BJ (cell line): ENCODE measurements at regions of chr7 and their contacts with region 1.

Region 1: GRCh38 chr7:116242178-116242577 is 31.8 kb downstream of the TES start:
- DNase-seq: no peak
- H3K4me3 ChIP-seq: no peak overlapping the region
- H3K27me3 ChIP-seq: no peaks in the 10 kb centered on the region
- CTCF ChIP-seq: peak; percentile 38

Region 2: DNA sequence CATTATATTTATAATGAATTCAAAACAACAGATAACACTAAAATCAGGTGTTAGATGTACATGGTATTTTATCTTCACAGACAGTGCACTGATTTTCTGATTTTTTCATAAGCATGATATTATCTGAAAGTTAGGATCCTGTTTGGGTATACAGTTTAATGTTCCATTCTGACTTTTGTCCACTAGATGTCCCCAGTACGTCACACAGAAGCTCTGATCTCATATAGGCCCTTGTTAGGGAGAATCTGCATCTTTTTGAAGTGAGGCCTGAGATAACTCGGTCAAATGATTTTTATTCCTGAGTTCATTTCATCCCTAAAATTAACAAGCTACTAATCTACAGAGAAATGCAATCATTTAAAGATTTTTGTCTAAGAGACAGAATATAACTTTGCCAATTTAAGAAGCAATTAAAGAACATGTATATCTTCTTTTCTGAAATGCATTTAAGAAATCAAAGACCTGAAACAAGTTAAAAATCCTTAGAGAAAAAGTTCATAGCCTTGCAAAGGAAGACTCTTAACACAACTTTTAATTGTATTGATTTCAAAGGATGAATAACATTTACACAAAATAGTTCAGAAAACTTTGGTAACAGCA is 103.9 kb before region 1 on chr7:
- CTCF ChIA-PET with region 1: interaction called, 16 read pairs
- POLR2A ChIA-PET with region 1: no interaction called
- DNase-seq: peak; percentile 17
- H3K4me3 ChIP-seq: no peak overlapping the region
- H3K27me3 ChIP-seq: no peaks in the 10 kb centered on the region
- CTCF ChIP-seq: peak; percentile 73

Region 3: GRCh38 chr7:116180302-116180701 is 61.9 kb before region 1 on chr7:
- CTCF ChIA-PET with region 1: interaction called, 192 read pairs
- POLR2A ChIA-PET with region 1: no interaction called
- DNase-seq: no peak
- H3K4me3 ChIP-seq: no peak overlapping the region
- H3K27me3 ChIP-seq: no peaks in the 10 kb centered on the region
- CTCF ChIP-seq: peak; percentile 78

Region 4: DNA sequence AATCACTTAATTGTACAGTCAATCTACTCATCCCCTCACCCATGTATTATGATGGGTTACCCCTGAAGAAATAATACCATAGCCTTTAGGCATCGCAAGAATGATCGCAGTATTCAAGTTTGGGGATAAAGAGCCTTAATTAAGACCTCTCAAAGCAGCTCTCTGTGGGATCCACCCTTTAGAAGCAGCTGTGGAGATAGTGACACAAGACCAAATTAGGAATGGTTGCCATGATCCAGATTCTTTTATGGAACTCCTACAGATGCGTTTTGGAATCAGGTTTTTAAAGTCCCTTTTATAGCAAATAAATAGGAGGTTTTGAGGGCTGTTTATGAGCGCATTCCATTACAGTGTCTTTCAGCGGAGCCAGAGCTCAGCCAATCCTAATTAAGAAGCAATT is 19.7 kb before region 1 on chr7:
- CTCF ChIA-PET with region 1: no interaction called
- POLR2A ChIA-PET with region 1: no interaction called
- DNase-seq: no peak
- H3K4me3 ChIP-seq: no peak overlapping the region
- H3K27me3 ChIP-seq: peaks cover 2% of the 10 kb centered on the region; the same call in 1 of the 2 replicates
- CTCF ChIP-seq: no peak

Region 5: GRCh38 chr7:116271963-116272839 is 30.0 kb after region 1 on chr7:
- CTCF ChIA-PET with region 1: no interaction called
- POLR2A ChIA-PET with region 1: no interaction called
- DNase-seq: peak; percentile 85
- H3K4me3 ChIP-seq: peak overlapping the region; percentile 14
- H3K27me3 ChIP-seq: no peaks in the 10 kb centered on the region
- CTCF ChIP-seq: no peak